H1 (cell line): ENCODE measurements at regions of chr17 and their contacts with region 1.

Region 1: GRCh38 chr17:32319548-32319905 is 22.4 kb downstream of the C17orf75 start:
- DNase-seq: peak; percentile 47 to 98
- H3K4me3 ChIP-seq: no peak overlapping the region
- H3K27ac ChIP-seq: no peak overlapping the region
- H3K4me1 ChIP-seq: peaks cover 0 to 15% (median 10%) of the 10 kb centered on the region in 4 experiments; a peak in 6 of 7 replicates
- H3K27me3 ChIP-seq: no peaks in the 10 kb centered on the region
- CTCF ChIP-seq: peak; percentile 96 to 99 (median 99)
- EP300 ChIP-seq: peak in 1 of 2 experiments; percentile 94; a peak in 1 of 3 replicates
- POLR2A ChIP-seq: no peak
- RAD21 ChIP-seq: peak; percentile 98

Region 2: GRCh38 chr17:32253117-32253611 is 66.4 kb before region 1 on chr17:
- CTCF ChIA-PET with region 1: interaction called, 170 read pairs
- POLR2A ChIA-PET with region 1: interaction called, 6 read pairs
- DNase-seq: peak; percentile 59 to 92
- H3K4me3 ChIP-seq: no peak overlapping the region
- H3K27ac ChIP-seq: no peak overlapping the region
- H3K4me1 ChIP-seq: peaks cover 0 to 2% (median 1%) of the 10 kb centered on the region in 4 experiments; a peak in 4 of 7 replicates
- H3K27me3 ChIP-seq: no peaks in the 10 kb centered on the region; a peak in 1 of 7 replicates
- CTCF ChIP-seq: peak; percentile 98 to 99 (median 98)
- EP300 ChIP-seq: no peak
- POLR2A ChIP-seq: no peak
- RAD21 ChIP-seq: peak; percentile 100

Region 3: GRCh38 chr17:32275060-32276042 is 44.2 kb before region 1 on chr17:
- CTCF ChIA-PET with region 1: interaction called, 18 read pairs
- POLR2A ChIA-PET with region 1: interaction called, 5 read pairs
- DNase-seq: peak in 1 of 2 experiments; percentile 70
- H3K4me3 ChIP-seq: no peak overlapping the region
- H3K27ac ChIP-seq: no peak overlapping the region
- H3K4me1 ChIP-seq: peaks cover 14 to 42% (median 31%) of the 10 kb centered on the region in 4 experiments
- H3K27me3 ChIP-seq: peaks cover 0 to 2% (median 0%) of the 10 kb centered on the region in 4 experiments; a peak in 3 of 7 replicates
- CTCF ChIP-seq: no peak
- EP300 ChIP-seq: no peak
- POLR2A ChIP-seq: no peak
- RAD21 ChIP-seq: no peak

Region 4: GRCh38 chr17:32286518-32286900 is 33.0 kb before region 1 on chr17:
- CTCF ChIA-PET with region 1: interaction called, 32 read pairs
- POLR2A ChIA-PET with region 1: interaction called, 3 read pairs
- DNase-seq: no peak
- H3K4me3 ChIP-seq: no peak overlapping the region
- H3K27ac ChIP-seq: no peak overlapping the region
- H3K4me1 ChIP-seq: peaks cover 14 to 32% (median 24%) of the 10 kb centered on the region in 4 experiments
- H3K27me3 ChIP-seq: no peaks in the 10 kb centered on the region; a peak in 1 of 7 replicates
- CTCF ChIP-seq: no peak
- EP300 ChIP-seq: no peak
- POLR2A ChIP-seq: no peak
- RAD21 ChIP-seq: no peak

Region 5: GRCh38 chr17:32330147-32330546 is 10.6 kb after region 1 on chr17:
- CTCF ChIA-PET with region 1: interaction called, 32 read pairs
- POLR2A ChIA-PET with region 1: interaction called, 7 read pairs
- DNase-seq: no peak
- H3K4me3 ChIP-seq: no peak overlapping the region
- H3K27ac ChIP-seq: no peak overlapping the region
- H3K4me1 ChIP-seq: no peaks in the 10 kb centered on the region
- H3K27me3 ChIP-seq: no peaks in the 10 kb centered on the region
- CTCF ChIP-seq: no peak
- EP300 ChIP-seq: no peak
- POLR2A ChIP-seq: no peak
- RAD21 ChIP-seq: no peak